Left ventricle myocardium superior (tissue), 1 donor: ENCODE measurements at regions of chr2 and their contacts with region 1.

Region 1: GRCh38 chr2:65536596-65536995 is 104.2 kb upstream of the SPRED2 start:
- DNase-seq: no peak
- ATAC-seq: no peak

Region 2: DNA sequence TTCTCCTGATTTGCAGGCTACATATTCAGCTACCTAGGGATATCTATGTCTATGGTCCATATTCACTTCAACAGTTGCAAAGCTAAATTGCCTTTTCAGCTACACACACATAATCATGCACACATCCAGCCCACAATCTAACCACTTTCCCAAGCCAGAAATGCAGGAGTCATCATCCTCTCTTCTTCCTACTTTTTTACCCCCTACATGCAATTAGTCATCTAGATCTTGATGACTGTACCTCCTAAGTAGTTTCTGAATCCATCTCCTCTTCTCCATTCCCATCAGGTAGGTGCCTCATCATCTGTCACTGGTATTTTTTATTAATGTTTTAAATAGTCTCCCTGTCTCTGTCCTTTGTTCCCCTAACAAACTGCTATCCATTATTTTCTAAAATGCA is 80.5 kb before region 1 on chr2:
- intact Hi-C with region 1: loop called (anchors 10 kb)
- DNase-seq: no peak
- ATAC-seq: no peak

Region 3: GRCh38 chr2:65576861-65577601 is 40.4 kb after region 1 on chr2:
- intact Hi-C with region 1: no loop called
- DNase-seq: no peak
- ATAC-seq: no peak

Region 4: DNA sequence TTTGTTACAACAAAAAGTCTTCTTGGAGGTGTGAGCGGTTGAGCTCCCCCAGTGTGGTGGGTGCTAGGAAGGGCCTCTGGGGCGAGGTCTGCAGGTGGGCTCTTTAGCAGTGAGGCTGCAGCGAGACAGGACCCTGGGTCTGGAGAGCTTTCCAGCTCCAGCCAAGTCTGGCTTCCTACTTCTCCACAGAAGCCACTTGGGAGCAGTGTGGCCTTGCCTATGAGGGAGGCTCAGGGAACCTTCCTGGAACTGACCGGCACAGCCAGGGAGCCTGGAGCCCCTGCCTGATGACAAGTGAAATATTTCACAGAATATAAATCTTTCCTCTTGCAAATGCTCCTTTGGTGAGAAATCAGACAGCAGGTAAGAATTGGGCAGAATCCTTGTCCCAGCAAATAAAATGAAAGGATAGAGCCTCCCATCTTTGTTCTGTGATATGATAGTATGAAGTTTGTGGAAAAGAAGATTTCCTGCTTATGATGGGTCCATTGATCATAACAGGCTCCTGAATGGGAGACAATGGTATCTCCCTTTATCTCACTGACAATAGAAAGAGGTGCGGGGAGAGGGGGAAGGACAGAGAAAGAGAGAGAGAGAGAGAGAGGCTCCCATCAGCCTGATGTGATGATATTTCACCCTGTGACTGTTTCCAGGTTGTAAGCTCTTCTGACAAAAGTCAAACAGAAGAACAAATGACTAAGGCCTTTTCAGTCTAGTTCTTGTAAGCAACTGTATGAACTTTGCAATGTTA is 185.6 kb after region 1 on chr2:
- intact Hi-C with region 1: no loop called
- DNase-seq: peak; percentile 58
- ATAC-seq: peak; percentile 91